Natural killer cell (primary cell): ENCODE measurements at regions of chr14 and their contacts with region 1.

Region 1: DNA sequence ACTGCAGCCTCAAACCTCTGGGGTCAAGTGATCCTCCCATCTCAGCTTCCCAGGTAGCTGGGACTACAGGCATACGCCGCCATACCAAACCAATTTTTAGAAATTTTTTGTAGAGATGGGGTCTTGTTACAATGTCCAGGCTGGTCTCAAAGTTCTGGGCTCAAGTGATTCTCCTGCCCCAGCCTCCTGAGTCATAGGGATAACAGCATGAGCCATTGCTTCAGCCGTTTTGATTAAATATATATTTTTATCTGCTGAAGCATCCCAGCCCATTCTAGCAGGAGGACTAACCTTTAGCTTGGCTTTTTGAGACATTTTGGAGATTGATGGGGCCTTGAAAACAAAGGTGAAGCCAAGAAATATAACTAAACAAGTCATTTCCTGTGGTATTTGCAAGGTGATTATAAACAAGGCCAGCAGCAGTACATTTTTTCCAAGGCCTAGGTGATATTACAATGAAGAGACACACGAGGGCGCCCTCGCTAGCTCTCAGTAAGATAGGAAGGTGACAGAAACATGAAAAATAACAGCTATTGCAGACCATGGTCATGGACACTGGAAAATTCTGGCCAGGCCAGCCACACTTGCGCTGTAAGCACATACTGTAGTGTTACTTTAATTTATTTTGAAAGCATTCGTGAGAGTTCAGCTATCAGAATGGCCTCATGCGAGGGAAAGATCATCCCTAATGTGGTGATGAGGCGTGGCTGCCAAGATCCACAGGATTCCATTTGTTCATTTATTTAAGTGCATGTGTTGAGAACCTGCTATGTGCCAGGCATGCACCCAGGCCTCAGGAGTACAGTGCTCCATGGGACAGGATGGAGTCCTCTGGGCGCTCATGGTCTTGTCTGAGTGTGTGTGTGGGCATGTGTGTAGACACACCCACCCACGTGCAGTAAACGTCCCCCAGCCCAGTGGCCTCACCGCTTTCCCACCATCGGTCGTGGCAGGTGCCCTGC is 63.5 kb downstream of the DGLUCY start:
- DNase-seq: peak; percentile 54 to 90
- ATAC-seq: peak; percentile 87 to 94 (median 90)
- H3K4me3 ChIP-seq: no peak overlapping the region
- H3K4me3 Mint-ChIP-seq: no peak overlapping the region
- H3K27ac ChIP-seq: peak overlapping the region; percentile 63
- H3K27ac Mint-ChIP-seq: peak overlapping the region; percentile 76 to 85
- H3K4me1 ChIP-seq: peaks cover 14% of the 10 kb centered on the region
- H3K4me1 Mint-ChIP-seq: peaks cover 12 to 20% of the 10 kb centered on the region in 2 donors
- H3K27me3 ChIP-seq: no peaks in the 10 kb centered on the region
- H3K27me3 Mint-ChIP-seq: no peaks in the 10 kb centered on the region
- CTCF ChIP-seq: peak; percentile 90

Region 2: GRCh38 chr14:90903101-90903500 is 274.3 kb before region 1 on chr14:
- intact Hi-C with region 1: loop called (anchors 1 kb)
- DNase-seq: peak; percentile 26 to 80
- ATAC-seq: peak; percentile 82 to 94 (median 86)
- H3K4me3 ChIP-seq: no peak overlapping the region
- H3K4me3 Mint-ChIP-seq: no peak overlapping the region
- H3K27ac ChIP-seq: no peak overlapping the region
- H3K27ac Mint-ChIP-seq: no peak overlapping the region
- H3K4me1 ChIP-seq: no peaks in the 10 kb centered on the region
- H3K4me1 Mint-ChIP-seq: peaks cover 0 to 3% of the 10 kb centered on the region in 2 donors
- H3K27me3 ChIP-seq: no peaks in the 10 kb centered on the region
- H3K27me3 Mint-ChIP-seq: no peaks in the 10 kb centered on the region
- CTCF ChIP-seq: peak; percentile 85

Region 3: GRCh38 chr14:91138511-91139359 is 38.6 kb before region 1 on chr14:
- intact Hi-C with region 1: loop called (anchors 1 kb)
- DNase-seq: peak in 1 of 2 donors; percentile 76
- ATAC-seq: peak; percentile 76 to 89 (median 83)
- H3K4me3 ChIP-seq: no peak overlapping the region
- H3K4me3 Mint-ChIP-seq: no peak overlapping the region
- H3K27ac ChIP-seq: no peak overlapping the region
- H3K27ac Mint-ChIP-seq: peak overlapping the region; percentile 43 to 66
- H3K4me1 ChIP-seq: peaks cover 13% of the 10 kb centered on the region
- H3K4me1 Mint-ChIP-seq: peaks cover 12 to 28% of the 10 kb centered on the region in 2 donors
- H3K27me3 ChIP-seq: no peaks in the 10 kb centered on the region
- H3K27me3 Mint-ChIP-seq: no peaks in the 10 kb centered on the region
- CTCF ChIP-seq: peak; percentile 58

Region 4: DNA sequence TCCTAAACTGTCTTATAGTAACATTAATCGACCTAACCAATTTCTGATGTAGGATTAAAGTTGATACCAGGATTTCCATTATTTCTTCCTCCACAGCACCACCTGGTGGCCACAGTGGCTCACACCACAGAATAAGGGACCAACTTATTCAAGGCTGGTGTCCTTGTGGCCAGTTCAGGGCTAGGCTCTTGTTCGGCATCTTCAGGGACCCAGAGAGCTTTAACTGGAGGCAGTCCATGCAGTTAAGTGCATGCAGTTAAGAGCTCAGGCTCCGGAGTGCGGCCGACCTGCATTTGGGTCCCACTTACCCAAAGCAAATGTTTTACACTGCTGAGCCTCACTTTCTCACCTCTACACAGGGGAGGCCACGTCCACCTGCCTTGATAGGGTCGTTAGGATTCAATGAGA is 109.2 kb after region 1 on chr14:
- intact Hi-C with region 1: loop called (anchors 1 kb)
- DNase-seq: peak; percentile 76 to 88
- ATAC-seq: peak; percentile 76 to 82 (median 79)
- H3K4me3 ChIP-seq: no peak overlapping the region
- H3K4me3 Mint-ChIP-seq: no peak overlapping the region
- H3K27ac ChIP-seq: peak overlapping the region; percentile 5
- H3K27ac Mint-ChIP-seq: peak overlapping the region; percentile 81 to 83
- H3K4me1 ChIP-seq: peaks cover 20% of the 10 kb centered on the region
- H3K4me1 Mint-ChIP-seq: peaks cover 33 to 36% of the 10 kb centered on the region in 2 donors
- H3K27me3 ChIP-seq: no peaks in the 10 kb centered on the region
- H3K27me3 Mint-ChIP-seq: no peaks in the 10 kb centered on the region
- CTCF ChIP-seq: peak; percentile 83

Region 5: GRCh38 chr14:91424813-91425530 is 247.6 kb after region 1 on chr14:
- intact Hi-C with region 1: loop called (anchors 2 kb)
- DNase-seq: no peak
- ATAC-seq: no peak
- H3K4me3 ChIP-seq: no peak overlapping the region
- H3K4me3 Mint-ChIP-seq: no peak overlapping the region
- H3K27ac ChIP-seq: no peak overlapping the region
- H3K27ac Mint-ChIP-seq: no peak overlapping the region
- H3K4me1 ChIP-seq: peaks cover 6% of the 10 kb centered on the region
- H3K4me1 Mint-ChIP-seq: peaks cover 6 to 25% of the 10 kb centered on the region in 2 donors
- H3K27me3 ChIP-seq: no peaks in the 10 kb centered on the region
- H3K27me3 Mint-ChIP-seq: no peaks in the 10 kb centered on the region
- CTCF ChIP-seq: no peak

Region 6: GRCh38 chr14:91774140-91775096 is 597.1 kb after region 1 on chr14:
- intact Hi-C with region 1: no loop called
- DNase-seq: no peak
- ATAC-seq: no peak
- H3K4me3 ChIP-seq: no peak overlapping the region
- H3K4me3 Mint-ChIP-seq: no peak overlapping the region
- H3K27ac ChIP-seq: no peak overlapping the region
- H3K27ac Mint-ChIP-seq: peak overlapping the region; percentile 19 to 21
- H3K4me1 ChIP-seq: no peaks in the 10 kb centered on the region
- H3K4me1 Mint-ChIP-seq: peaks cover 6 to 12% of the 10 kb centered on the region in 2 donors
- H3K27me3 ChIP-seq: no peaks in the 10 kb centered on the region
- H3K27me3 Mint-ChIP-seq: no peaks in the 10 kb centered on the region
- CTCF ChIP-seq: no peak